Motor neuron (in vitro differentiated cells): ENCODE measurements at regions of chr7 and their contacts with region 1.

Region 1: GRCh38 chr7:96414931-96415292 is 93.0 kb upstream of the SLC25A13 start:
- ATAC-seq: peak in 5 of 8 experiments; percentile 38 to 87 (median 69)
- H3K4me3 ChIP-seq: no peak overlapping the region
- H3K27ac ChIP-seq: no peak overlapping the region
- H3K4me1 ChIP-seq: peaks cover 0 to 2% of the 10 kb centered on the region in 2 donors

Region 2: GRCh38 chr7:96075510-96076349 is 339.2 kb before region 1 on chr7:
- in situ Hi-C with region 1: no loop called
- ATAC-seq: peak; percentile 90 to 97 (median 94)
- H3K4me3 ChIP-seq: peak overlapping the region; percentile 34 to 52 (median 42)
- H3K27ac ChIP-seq: no peak overlapping the region
- H3K4me1 ChIP-seq: no peaks in the 10 kb centered on the region

Region 3: DNA sequence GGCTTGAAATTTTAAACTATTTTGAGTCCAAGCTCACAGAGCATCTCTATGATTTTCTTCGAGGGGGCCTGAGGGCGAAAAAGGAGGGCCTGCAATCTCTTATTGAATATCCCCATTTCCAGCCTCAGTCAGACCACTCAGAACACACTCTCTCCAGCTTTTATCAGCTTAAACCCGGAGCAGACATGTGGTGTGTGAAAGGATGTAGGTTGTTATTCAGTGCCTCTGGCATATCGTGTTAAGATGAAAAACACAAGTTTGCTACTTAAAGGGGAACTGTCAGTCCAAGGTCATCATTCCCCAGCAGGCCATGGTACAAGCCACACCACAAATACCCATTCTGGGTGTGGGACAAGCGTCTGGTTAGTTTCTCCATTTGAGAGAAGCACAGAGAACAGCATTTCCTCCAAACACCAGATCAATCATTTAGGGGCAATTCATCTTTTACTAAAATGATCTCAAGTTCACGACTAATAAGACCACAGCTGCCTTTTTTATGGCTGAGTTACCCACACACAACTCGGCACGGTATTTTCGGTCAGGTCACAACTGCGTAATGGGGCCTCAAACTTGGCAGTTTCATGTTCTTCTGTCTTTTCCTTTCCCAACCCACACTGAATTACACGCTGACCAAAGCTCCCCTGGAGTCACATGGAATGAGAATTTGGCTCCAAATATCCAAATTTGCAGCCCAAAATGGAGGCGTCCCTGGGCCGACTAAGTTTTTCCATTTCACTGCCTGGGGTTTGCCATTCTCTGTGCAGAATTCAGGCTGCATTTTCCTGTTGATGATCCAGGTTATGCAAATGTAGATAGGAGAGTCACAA is 106.4 kb after region 1 on chr7:
- in situ Hi-C with region 1: no loop called
- ATAC-seq: no peak
- H3K4me3 ChIP-seq: no peak overlapping the region
- H3K27ac ChIP-seq: no peak overlapping the region
- H3K4me1 ChIP-seq: peaks cover 2% of the 10 kb centered on the region in 2 donors

Region 4: GRCh38 chr7:96663442-96663841 is 248.5 kb after region 1 on chr7:
- in situ Hi-C with region 1: no loop called
- ATAC-seq: no peak
- H3K4me3 ChIP-seq: no peak overlapping the region
- H3K27ac ChIP-seq: no peak overlapping the region
- H3K4me1 ChIP-seq: no peaks in the 10 kb centered on the region

Region 5: DNA sequence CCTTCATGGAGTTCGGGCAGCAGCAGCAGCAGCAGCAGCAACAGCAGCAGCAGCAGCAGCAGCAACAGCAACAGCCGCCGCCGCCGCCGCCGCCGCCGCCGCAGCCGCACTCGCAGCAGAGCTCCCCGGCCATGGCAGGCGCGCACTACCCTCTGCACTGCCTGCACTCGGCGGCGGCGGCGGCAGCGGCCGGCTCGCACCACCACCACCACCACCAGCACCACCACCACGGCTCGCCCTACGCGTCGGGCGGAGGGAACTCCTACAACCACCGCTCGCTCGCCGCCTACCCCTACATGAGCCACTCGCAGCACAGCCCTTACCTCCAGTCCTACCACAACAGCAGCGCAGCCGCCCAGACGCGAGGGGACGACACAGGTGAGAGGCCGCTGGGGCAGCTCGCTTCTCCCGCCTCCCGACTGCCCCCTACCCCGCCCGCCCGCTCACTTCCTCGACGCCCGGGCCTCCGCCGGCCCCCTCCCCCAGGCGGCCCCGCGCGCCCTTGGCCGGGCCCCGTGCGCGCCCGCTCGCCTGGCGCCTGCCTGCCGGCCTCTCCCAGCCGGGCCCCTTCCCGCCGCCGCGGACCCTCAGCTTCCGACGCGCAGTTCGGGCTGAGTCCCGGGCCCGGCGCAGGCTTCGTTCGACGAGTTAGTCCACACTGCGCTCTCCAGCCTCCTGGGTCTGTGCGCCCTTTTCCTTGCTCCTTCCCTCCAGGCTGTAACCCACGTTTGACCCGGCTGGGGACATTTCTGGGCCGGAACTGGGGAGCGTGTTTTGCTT is 591.3 kb after region 1 on chr7:
- in situ Hi-C with region 1: loop called in 1 of 9 experiments (anchors 25 kb)
- ATAC-seq: peak; percentile 66 to 92 (median 90)
- H3K4me3 ChIP-seq: peak overlapping the region; percentile 35 to 49 (median 37)
- H3K27ac ChIP-seq: no peak overlapping the region
- H3K4me1 ChIP-seq: no peaks in the 10 kb centered on the region